Testis (tissue), 5 donors: ENCODE measurements at regions of chr1 and their contacts with region 1.

Region 1: GRCh38 chr1:36285448-36286101 is 20.6 kb upstream of the SH3D21 start:
- DNase-seq: peak; percentile 90
- H3K4me3 ChIP-seq: no peak overlapping the region
- H3K27ac ChIP-seq: peak overlapping the region; percentile 64 to 71
- H3K4me1 ChIP-seq: peaks cover 28% of the 10 kb centered on the region
- H3K27me3 ChIP-seq: no peaks in the 10 kb centered on the region
- CTCF ChIP-seq: peak; percentile 63 to 83 (median 82)
- POLR2A ChIP-seq: no peak

Region 2: DNA sequence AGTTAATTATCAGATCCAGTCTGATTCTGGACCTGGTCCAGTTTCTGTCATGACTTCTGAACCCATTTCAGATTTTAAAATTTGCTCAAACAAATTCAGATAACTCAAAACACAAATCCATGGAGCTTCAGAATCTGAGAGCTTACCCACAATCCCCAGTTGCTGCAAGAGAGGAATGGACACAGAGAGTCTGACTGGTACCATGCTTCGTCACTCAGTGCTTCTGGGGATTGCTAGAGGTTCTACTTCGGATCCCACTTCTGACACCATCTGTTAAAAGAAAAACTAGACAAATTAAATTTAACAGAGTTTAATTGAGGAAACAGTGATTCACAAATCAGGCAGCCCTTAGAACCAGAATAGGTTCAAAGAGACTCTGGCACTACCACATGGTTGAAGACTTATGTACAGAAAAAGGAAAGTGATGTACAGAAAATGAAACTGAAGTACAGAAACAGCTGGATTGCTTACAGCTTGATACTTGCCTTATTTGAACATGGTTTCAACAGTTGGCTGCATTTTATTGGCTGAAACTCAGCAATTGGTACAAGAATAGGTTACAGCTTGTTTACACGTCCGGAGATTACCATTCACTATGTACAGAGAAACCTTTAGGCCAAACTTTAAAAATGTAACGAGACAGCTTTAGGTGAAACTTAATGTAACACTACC is 262.3 kb before region 1 on chr1:
- intact Hi-C with region 1: no loop called
- DNase-seq: no peak
- H3K4me3 ChIP-seq: no peak overlapping the region
- H3K27ac ChIP-seq: no peak overlapping the region
- H3K4me1 ChIP-seq: no peaks in the 10 kb centered on the region
- H3K27me3 ChIP-seq: no peaks in the 10 kb centered on the region
- CTCF ChIP-seq: no peak
- POLR2A ChIP-seq: no peak

Region 3: DNA sequence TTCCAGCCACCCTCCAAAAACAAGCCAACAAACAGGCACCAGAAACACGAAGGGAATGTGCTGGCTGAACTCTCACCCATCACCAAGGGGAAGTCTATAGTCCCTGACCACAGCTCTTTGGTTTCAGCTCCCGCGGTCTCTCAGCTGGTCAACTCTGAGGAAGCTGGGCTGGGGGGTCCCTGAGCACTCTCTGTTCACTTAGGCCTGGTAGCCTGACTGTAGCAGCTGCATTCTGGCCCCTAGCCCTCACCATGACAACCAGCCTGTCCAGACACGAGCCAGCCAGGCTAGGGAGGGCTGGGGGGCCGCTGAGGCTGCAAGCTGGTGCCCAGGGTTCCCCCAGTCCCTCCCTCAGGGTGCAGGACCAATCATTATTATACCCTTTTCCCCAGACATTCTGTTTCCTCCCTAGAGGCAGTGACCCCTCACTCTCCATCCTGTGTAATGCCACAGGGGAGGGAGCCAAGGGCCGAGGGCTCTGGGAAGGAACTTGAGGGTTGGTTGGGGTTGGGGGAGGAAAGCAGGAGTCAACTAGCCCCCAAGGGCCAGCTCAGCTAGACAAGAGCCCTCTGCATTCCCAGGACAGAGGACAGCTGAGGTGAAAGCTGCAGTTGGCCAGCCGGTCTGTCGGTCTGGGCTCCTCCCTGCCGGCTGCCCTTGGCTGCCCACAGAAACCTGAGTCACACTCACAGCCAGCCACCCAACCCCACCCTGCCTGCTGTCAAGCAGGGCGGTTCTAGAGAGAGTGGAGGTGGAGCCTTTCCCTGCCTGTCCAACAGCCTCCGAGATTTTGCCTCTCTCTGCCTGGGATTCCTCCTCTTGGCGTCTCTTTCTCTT is 135.1 kb before region 1 on chr1:
- intact Hi-C with region 1: loop called (anchors 10 kb)
- DNase-seq: peak; percentile 95
- H3K4me3 ChIP-seq: no peak overlapping the region
- H3K27ac ChIP-seq: peak overlapping the region; percentile 87 to 94
- H3K4me1 ChIP-seq: peaks cover 39% of the 10 kb centered on the region
- H3K27me3 ChIP-seq: no peaks in the 10 kb centered on the region
- CTCF ChIP-seq: no peak
- POLR2A ChIP-seq: peak; percentile 39

Region 4: GRCh38 chr1:36223993-36224536 is 61.5 kb before region 1 on chr1 and contains the start of gene THRAP3:
- intact Hi-C with region 1: loop called (anchors 10 kb)
- DNase-seq: peak; percentile 100
- H3K4me3 ChIP-seq: peak within 1 kb of the TSS; percentile 86 to 98
- H3K27ac ChIP-seq: peak within 1 kb of the TSS; percentile 98
- H3K4me1 ChIP-seq: peaks cover 27% of the 10 kb centered on the region
- H3K27me3 ChIP-seq: no peaks in the 10 kb centered on the region
- CTCF ChIP-seq: no peak
- POLR2A ChIP-seq: peak; percentile 96
- total RNA-seq, gene THRAP3: 93.0 to 112 TPM